Right ventricle myocardium superior (tissue), 1 donor: ENCODE measurements at regions of chr6 and their contacts with region 1.

Region 1: GRCh38 chr6:17599885-17600526 is at the start of gene FAM8A1:
- DNase-seq: peak; percentile 96
- ATAC-seq: peak; percentile 99
- total RNA-seq, gene FAM8A1: 16.7 TPM

Region 2: DNA sequence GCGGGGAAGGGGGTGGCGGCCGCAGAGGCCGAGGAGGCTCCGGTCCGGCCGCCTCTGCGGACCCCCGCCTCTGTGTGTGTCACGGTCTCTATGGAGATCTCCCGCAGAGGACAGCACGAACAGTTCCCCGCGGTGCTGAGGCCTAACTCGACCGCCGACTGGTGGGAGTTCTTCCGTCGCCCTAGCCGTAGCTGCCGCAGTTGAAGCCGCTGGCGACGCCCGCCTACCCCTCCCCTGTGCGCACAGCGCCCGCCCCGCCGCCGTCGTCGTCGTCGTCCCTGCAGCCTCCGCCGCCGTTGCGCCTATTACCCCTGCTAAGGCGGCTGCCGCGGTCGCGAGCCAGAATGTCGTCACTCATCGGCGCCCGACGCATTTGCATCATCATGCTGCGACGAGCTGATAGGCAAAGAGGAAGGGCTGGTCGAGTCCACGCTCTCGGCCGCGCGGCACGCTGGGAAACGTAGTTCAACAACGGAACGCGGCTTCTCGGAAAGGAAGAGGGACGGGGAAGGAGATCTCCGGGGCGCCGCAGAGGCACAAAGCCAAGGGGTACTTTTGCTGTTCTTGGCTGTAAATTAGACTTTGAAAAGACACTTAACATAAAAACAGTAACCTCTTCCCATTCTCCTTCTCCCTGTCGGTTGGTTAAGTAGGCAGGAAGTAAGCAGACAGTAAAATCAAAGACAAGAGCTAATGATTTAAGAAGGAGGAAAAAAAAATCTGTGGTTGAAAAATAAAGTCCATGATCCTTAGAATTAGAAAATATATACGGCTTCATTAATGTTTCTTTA is 106.8 kb after region 1 on chr6 and contains the start of gene NUP153:
- intact Hi-C with region 1: loop called (anchors 10 kb)
- DNase-seq: peak; percentile 100
- ATAC-seq: peak; percentile 89
- total RNA-seq, gene NUP153: 23.6 TPM